ENCODE measurements at regions of chr1 and their contacts with region 1.

Region 1: DNA sequence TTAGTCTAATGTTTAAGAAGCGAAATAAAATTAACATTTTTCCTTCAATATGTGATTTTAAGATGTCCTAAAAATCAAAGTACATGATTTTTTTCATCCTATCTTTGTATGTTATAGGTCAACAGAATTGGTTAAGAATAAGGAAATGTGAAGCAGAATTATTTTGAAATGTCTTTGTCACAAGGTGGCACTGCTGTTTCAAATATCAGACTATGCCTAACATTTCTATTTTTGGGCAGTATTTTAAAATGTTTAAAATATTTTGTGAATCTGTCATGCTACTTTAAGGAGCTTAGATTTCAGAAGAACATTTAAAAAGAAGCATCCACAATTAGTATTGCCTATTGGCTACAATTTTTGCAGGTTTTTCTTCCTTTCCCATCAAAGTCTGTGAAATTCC is 38.7 kb downstream of the AMY1C start:
- DNase-seq: no peak
- ATAC-seq: no peak
- H3K4me3 ChIP-seq: no peak overlapping the region
- H3K27ac ChIP-seq: no peak overlapping the region
- H3K4me1 ChIP-seq: no peaks in the 10 kb centered on the region
- H3K27me3 ChIP-seq: no peaks in the 10 kb centered on the region
- CTCF ChIP-seq: peak in 6 of 12 donors; percentile 13 to 32 (median 25)
- POLR2A ChIP-seq: no peak

Region 2: DNA sequence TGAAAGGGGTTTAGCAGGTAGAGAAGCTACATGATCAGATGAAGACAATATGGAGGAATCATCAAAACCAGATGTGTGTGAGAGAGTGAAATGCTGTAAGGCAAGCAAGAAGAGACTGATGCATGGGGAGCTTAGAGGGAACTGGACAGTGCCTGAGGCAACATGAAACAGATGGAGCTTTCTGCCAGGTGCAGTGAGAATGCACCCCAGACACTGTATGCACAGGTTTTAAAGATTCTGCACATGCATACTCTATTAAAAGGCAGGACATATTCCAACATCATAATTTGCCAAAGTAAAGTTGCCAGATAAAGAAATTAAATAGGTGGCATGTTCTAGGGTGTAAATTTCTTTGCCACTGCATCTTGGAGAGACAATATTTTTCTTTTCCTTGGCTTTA is 161.4 kb after region 1 on chr1:
- intact Hi-C with region 1: loop called in 1 of 10 experiments (anchors 5 kb)
- DNase-seq: peak in 1 of 5 donors; percentile 25
- ATAC-seq: no peak
- H3K4me3 ChIP-seq: no peak overlapping the region
- H3K27ac ChIP-seq: no peak overlapping the region
- H3K4me1 ChIP-seq: no peaks in the 10 kb centered on the region
- H3K27me3 ChIP-seq: no peaks in the 10 kb centered on the region
- CTCF ChIP-seq: no peak
- POLR2A ChIP-seq: no peak

Region 3: DNA sequence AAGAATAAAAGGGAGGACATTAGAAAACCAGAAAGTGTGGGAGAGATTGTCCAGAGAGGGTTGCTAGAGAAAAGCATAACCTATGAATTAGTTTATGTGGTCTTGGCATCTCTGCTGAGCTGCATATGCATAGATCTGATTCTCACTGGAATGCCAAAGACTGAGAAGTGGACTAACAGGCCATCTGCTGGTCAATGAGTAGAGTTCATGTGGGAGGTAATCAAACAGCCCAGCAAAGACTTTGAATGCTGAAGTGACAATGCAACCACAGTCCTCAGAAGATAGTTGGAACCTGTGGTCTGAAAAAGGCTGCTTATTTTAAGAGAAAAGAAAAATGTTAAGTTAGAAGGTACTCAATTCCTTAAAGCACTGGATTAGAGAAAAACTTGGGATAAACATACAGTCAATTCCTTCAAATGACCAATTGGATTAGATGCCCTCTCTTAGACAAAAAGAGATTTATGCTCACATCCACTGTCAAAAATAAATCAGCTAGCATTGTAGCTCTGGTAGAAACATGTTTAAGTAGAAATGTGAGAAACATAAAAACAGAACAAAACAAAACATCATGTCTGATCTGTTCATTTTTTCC is 344.1 kb after region 1 on chr1:
- intact Hi-C with region 1: loop called in 4 of 10 experiments (anchors 5 kb)
- DNase-seq: no peak
- ATAC-seq: peak in 1 of 4 donors; percentile 53
- H3K4me3 ChIP-seq: no peak overlapping the region
- H3K27ac ChIP-seq: no peak overlapping the region
- H3K4me1 ChIP-seq: no peaks in the 10 kb centered on the region
- H3K27me3 ChIP-seq: no peaks in the 10 kb centered on the region
- CTCF ChIP-seq: peak in 7 of 12 donors; percentile 21 to 41 (median 29)
- POLR2A ChIP-seq: no peak

Measured in heart left ventricle (tissue), 16 donors.